Prostate gland (tissue), 2 donors: ENCODE measurements at regions of chr11 and their contacts with region 1.

Region 1: DNA sequence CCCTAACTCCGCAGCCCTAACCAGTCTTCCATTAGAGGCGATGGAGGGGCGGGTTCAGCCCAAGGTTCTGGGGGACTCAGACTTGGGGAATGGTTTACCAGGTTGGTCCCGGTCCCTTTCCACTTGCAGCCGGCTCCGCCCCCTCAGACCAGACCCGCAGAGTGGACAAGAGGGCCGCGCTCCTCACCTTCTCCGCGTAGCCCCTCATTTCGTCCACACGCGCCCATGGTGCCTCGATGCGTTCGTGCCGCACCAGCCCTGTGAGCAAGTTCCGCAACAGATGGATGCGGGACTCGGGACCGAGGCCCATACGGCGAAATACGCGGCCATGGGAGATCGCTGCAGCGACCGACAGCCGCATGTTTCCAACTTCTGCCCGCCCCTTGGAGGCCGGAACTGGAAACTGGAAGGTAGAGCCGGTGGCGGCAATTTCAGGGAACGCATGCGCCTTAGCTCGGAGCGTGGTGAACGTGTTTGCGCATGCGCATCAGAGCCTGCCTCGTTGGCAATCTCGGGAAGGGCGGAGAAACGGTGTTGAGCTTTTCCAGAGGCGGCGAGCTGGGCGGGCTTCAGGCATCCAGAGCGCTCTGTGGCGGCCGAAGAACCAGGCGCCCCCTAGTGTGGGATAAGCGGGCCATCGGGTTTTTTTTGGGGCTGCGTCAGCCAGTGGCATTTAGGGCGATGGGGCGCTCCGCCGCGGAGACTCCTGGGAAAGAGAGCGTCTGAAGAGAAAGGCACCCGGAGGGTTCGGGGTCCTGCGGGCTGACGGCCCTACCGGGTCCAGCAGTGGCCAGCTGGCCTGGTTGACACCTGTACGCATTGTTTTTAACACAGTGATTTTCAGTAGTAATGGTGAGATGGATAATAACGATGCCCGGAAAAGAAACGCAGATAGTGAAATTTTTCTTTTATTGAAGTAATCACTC is at the start of gene MRPL17:
- DNase-seq: peak; percentile 98
- H3K4me3 ChIP-seq: peak within 1 kb of the TSS; percentile 72 to 85
- H3K27ac ChIP-seq: peak within 1 kb of the TSS; percentile 82 to 90
- H3K4me1 ChIP-seq: peaks cover 6% of the 10 kb centered on the region
- H3K27me3 ChIP-seq: no peaks in the 10 kb centered on the region
- CTCF ChIP-seq: peak; percentile 86 to 98 (median 96)
- POLR2A ChIP-seq: peak; percentile 79
- total RNA-seq, gene MRPL17: 18.3 to 44.6 TPM

Region 2: DNA sequence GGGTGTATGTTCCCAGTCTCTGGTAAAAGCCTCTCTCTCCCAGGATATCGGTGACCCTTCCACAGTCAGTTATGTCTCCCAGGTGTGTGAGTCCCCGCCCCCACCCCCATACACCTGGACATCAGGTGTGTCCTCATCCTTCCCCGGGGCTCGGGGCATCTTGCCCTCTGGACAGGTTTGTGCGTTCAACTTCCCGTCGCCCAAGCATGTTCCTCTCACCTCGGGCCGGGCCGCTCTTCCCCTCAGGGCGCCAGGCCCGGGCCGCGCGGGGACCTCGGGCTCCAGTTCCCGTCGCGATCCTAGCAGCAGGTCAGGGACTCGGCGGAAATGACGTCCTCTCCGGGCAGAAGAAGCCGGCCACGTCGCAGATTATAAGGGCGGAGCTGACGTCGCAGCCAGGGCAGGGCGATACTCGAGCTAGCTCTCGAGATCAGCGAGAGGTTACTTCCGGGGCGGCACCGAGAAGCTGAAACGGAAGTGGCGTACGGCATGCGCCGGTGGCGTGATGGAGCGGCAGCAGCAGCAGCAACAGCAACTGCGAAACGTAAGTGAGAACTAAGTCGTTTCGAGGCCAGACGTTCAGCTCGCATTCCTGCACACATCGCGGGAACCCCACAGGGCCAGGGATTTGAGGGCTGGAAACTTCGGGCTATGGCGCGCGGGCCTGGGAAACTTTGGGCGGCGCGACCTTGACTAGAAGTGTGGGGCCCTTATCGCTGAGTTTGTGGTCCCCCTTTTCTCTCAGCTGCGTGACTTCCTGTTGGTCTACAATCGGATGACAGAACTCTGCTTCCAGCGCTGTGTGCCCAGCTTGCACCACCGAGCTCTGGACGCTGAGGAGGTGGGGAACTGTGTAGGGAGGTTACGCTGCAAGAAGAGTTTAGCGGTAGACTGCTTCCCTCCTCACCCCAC is 201.9 kb before region 1 on chr11 and contains the starts of genes ARFIP2 and TIMM10B:
- intact Hi-C with region 1: loop called (anchors 5 kb)
- DNase-seq: peak; percentile 99
- H3K4me3 ChIP-seq: peak within 1 kb of the TSS; percentile 62 to 75
- H3K27ac ChIP-seq: peak within 1 kb of the TSS; percentile 94
- H3K4me1 ChIP-seq: peaks cover 16% of the 10 kb centered on the region
- H3K27me3 ChIP-seq: no peaks in the 10 kb centered on the region
- CTCF ChIP-seq: peak in 1 of 4 experiments; percentile 25
- POLR2A ChIP-seq: peak; percentile 90
- total RNA-seq, gene ARFIP2: 87.3 to 110 TPM
- total RNA-seq, gene TIMM10B: 29.4 to 35.6 TPM

Region 3: GRCh38 chr11:6531267-6531752 is 151.9 kb before region 1 on chr11:
- intact Hi-C with region 1: loop called (anchors 5 kb)
- DNase-seq: no peak
- H3K4me3 ChIP-seq: no peak overlapping the region
- H3K27ac ChIP-seq: no peak overlapping the region
- H3K4me1 ChIP-seq: no peaks in the 10 kb centered on the region
- H3K27me3 ChIP-seq: no peaks in the 10 kb centered on the region
- CTCF ChIP-seq: peak; percentile 29 to 80 (median 70)
- POLR2A ChIP-seq: no peak

Region 4: DNA sequence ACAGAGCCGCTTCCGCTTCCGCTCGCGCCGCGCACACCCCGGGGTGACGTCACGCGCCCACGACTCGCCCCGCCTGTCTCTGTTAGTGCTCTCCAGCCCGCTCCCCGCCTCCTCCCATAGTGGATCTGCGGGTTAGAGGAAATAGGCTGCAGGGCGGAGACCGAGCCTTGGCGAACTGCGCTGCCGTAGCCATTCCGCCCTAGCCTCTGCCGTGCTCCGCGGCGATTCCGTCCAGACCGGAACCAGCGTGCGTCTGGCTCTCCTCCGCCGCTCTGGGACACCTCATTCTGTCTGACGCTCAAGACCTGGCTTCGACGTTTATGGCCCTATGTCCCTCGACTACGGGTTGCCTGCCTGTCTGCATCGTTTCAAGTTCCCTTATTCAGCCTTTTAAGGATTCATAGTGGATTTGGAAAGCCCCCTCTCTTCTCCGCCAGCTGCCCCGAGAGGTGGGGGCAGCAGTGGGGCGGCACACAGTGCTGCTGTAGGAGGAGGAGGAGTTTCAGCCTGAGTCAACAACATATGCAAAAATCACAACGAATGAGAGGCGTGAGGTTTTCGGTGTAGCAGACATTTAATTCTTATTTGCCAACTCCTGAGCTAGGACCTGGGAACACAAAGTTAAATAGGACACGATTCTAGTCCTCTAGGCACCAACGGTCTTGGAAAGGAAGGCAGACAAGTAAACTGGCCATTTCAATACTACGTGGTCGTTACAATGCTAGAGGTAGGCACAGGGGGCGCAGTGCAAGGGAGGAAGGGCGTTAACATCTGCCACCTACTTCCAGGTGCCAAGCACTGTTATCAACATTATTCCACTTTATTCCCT is 70.8 kb before region 1 on chr11 and contains the start of gene TAF10:
- intact Hi-C with region 1: loop called (anchors 5 kb)
- DNase-seq: peak; percentile 97
- H3K4me3 ChIP-seq: peak within 1 kb of the TSS; percentile 74 to 91
- H3K27ac ChIP-seq: peak within 1 kb of the TSS; percentile 98
- H3K4me1 ChIP-seq: peaks cover 14% of the 10 kb centered on the region
- H3K27me3 ChIP-seq: no peaks in the 10 kb centered on the region
- CTCF ChIP-seq: peak in 2 of 4 experiments; percentile 57 to 60
- POLR2A ChIP-seq: peak; percentile 96
- total RNA-seq, gene TAF10: 130 to 193 TPM

Region 5: GRCh38 chr11:6622261-6623171 is 60.7 kb before region 1 on chr11:
- intact Hi-C with region 1: no loop called
- DNase-seq: no peak
- H3K4me3 ChIP-seq: no peak overlapping the region
- H3K27ac ChIP-seq: no peak overlapping the region
- H3K4me1 ChIP-seq: no peaks in the 10 kb centered on the region
- H3K27me3 ChIP-seq: no peaks in the 10 kb centered on the region
- CTCF ChIP-seq: no peak
- POLR2A ChIP-seq: no peak

Region 6: GRCh38 chr11:6968816-6969215 is 285.6 kb after region 1 on chr11:
- intact Hi-C with region 1: no loop called
- DNase-seq: no peak
- H3K4me3 ChIP-seq: no peak overlapping the region
- H3K27ac ChIP-seq: no peak overlapping the region
- H3K4me1 ChIP-seq: no peaks in the 10 kb centered on the region
- H3K27me3 ChIP-seq: no peaks in the 10 kb centered on the region
- CTCF ChIP-seq: no peak
- POLR2A ChIP-seq: no peak